Activated T-helper 2 cell treated with anti-CD3 and anti-CD28 coated beads, Interferon-gamma antibody, Interleukin-2, Interleukin-4, amounts not matched to agents 10 μg/mL and 5 μg/mL and 100 μg/mL, durations not matched to agents 14 hours and 24 hours and 36 hours (primary cell): ENCODE measurements at regions of chr3 and their contacts with region 1.

Region 1: GRCh38 chr3:46276502-46277099 is 34.3 kb downstream of the CCR3 start:
- DNase-seq: peak; percentile 65
- H3K4me3 Mint-ChIP-seq: no peak overlapping the region
- H3K27ac Mint-ChIP-seq: no peak overlapping the region
- H3K4me1 Mint-ChIP-seq: peaks cover 38% of the 10 kb centered on the region
- H3K27me3 Mint-ChIP-seq: peaks cover 49% of the 10 kb centered on the region

Region 2: DNA sequence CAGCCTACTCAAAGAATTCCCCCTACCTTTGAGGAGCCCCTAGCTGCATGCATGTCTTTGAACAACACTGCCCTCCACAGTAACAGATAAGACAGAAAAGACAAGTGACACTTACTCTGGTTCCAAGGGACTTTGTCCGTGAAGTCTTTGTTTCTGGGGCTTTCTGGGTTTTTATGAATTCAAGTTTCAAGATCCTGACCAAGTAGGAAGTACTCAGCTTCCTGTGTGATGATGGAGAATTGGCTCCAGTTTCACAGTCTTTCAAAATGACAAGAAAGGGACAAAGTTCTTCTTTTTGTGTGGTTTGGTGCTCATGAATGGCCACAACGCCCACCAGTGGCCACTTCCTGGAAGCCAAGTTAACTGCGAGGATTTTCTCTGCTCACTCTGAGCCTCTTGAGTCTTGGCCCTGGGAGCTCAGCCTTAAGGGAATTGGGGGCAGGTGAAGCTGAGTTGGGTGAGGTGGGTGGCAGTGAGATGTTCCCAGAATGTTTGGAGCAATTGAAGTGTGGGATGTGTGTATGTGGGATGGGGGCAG is 68.4 kb before region 1 on chr3 and contains the start of gene CCR1:
- intact Hi-C with region 1: loop called (anchors 5 kb)
- DNase-seq: peak; percentile 44
- H3K4me3 Mint-ChIP-seq: no peak within 1 kb of the TSS
- H3K27ac Mint-ChIP-seq: peak within 1 kb of the TSS; percentile 18
- H3K4me1 Mint-ChIP-seq: peaks cover 25% of the 10 kb centered on the region
- H3K27me3 Mint-ChIP-seq: peaks cover 31% of the 10 kb centered on the region
- total RNA-seq, gene CCR1: 0.41 and 0.51 TPM in 2 replicates